CD4-positive, alpha-beta T cell (primary cell): ENCODE measurements at regions of chr1 and their contacts with region 1.

Region 1: DNA sequence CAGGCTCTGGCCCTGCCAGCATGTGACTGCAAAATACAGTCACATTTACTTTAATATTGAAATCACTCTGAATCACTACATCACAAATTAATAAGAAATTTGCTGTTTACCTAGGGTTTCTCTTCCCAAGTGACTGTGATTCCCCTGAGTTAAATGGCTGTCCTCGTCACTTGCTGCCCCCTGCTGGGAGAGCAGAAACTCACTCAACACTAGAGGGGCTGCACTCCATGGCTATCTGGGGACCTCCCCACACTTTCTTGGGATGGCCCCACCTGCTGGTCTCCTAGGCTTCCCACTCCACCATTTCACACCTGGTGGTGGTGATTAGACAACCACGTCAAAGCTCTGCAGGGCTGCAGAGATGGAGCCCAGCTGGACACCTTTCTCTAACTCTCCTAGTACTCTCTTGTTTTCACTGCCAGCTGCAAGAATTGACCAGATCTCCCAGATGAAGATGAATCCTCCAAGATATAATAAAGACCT is 63.4 kb downstream of the CD2 start:
- DNase-seq: peak; percentile 50 to 89 (median 70)
- ATAC-seq: peak; percentile 63
- H3K4me3 ChIP-seq: no peak overlapping the region
- H3K4me3 Mint-ChIP-seq: peak overlapping the region; percentile 68
- H3K27ac ChIP-seq: no peak overlapping the region
- H3K27ac Mint-ChIP-seq: peak overlapping the region; percentile 95
- H3K4me1 ChIP-seq: peaks cover 23% of the 10 kb centered on the region
- H3K4me1 Mint-ChIP-seq: peaks cover 38% of the 10 kb centered on the region
- H3K27me3 ChIP-seq: no peaks in the 10 kb centered on the region
- H3K27me3 Mint-ChIP-seq: no peaks in the 10 kb centered on the region
- CTCF ChIP-seq: peak; percentile 94

Region 2: GRCh38 chr1:116411784-116412479 is 405.7 kb before region 1 on chr1:
- CTCF ChIA-PET with region 1: no interaction called
- POLR2A ChIA-PET with region 1: no interaction called
- intact Hi-C with region 1: no loop called
- DNase-seq: no peak
- ATAC-seq: no peak
- H3K4me3 ChIP-seq: no peak overlapping the region
- H3K4me3 Mint-ChIP-seq: no peak overlapping the region
- H3K27ac ChIP-seq: no peak overlapping the region
- H3K27ac Mint-ChIP-seq: no peak overlapping the region
- H3K4me1 ChIP-seq: no peaks in the 10 kb centered on the region
- H3K4me1 Mint-ChIP-seq: peaks cover 27% of the 10 kb centered on the region
- H3K27me3 ChIP-seq: no peaks in the 10 kb centered on the region
- H3K27me3 Mint-ChIP-seq: no peaks in the 10 kb centered on the region
- CTCF ChIP-seq: no peak

Region 3: DNA sequence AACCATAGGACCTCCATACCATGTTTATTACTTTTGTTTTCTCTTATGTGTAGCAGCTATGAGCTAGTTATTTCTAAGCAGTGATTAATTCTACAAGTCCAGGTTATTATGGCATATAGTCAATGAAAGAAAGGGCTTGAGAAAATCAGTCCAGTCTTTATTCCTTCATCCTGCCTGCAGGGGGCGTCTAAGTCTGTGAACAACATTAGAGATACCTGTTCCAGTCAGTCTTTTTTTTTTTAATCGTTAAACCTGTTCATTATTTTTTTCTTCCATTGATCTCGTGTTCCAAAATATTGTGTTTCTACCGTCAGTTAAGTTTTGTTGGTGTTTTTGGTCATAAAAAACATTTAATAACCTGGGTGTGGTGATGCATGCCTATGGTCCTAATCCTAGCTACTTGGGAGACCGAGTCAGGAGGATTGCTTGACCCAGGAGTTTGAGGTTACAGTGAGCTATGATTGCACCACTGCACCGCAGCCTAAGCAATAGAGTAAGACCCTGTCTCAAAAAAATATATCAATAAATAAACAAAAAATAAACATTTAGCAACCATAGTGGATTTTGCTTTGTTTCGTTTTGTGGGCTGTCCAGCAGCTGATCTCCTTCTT is 92.8 kb before region 1 on chr1:
- CTCF ChIA-PET with region 1: interaction called, 15 read pairs
- POLR2A ChIA-PET with region 1: no interaction called
- intact Hi-C with region 1: loop called in 1 of 2 experiments (anchors 1 kb)
- DNase-seq: peak; percentile 56 to 90 (median 72)
- ATAC-seq: no peak
- H3K4me3 ChIP-seq: no peak overlapping the region
- H3K4me3 Mint-ChIP-seq: no peak overlapping the region
- H3K27ac ChIP-seq: no peak overlapping the region
- H3K27ac Mint-ChIP-seq: no peak overlapping the region
- H3K4me1 ChIP-seq: peaks cover 3% of the 10 kb centered on the region
- H3K4me1 Mint-ChIP-seq: peaks cover 22% of the 10 kb centered on the region
- H3K27me3 ChIP-seq: no peaks in the 10 kb centered on the region
- H3K27me3 Mint-ChIP-seq: no peaks in the 10 kb centered on the region
- CTCF ChIP-seq: peak; percentile 97

Region 4: GRCh38 chr1:116754198-116754977 is 63.2 kb before region 1 on chr1 and contains the start of gene CD2:
- CTCF ChIA-PET with region 1: interaction called, 5 read pairs
- POLR2A ChIA-PET with region 1: interaction called, 18 read pairs
- intact Hi-C with region 1: loop called in 1 of 2 experiments (anchors 5 kb)
- DNase-seq: peak in 11 of 14 experiments; percentile 47 to 82 (median 60)
- ATAC-seq: peak; percentile 86
- H3K4me3 ChIP-seq: peak within 1 kb of the TSS; percentile 78
- H3K4me3 Mint-ChIP-seq: peak within 1 kb of the TSS; percentile 97
- H3K27ac ChIP-seq: peak within 1 kb of the TSS; percentile 81 to 82
- H3K27ac Mint-ChIP-seq: peak within 1 kb of the TSS; percentile 99
- H3K4me1 ChIP-seq: peaks cover 19% of the 10 kb centered on the region
- H3K4me1 Mint-ChIP-seq: peaks cover 59% of the 10 kb centered on the region
- H3K27me3 ChIP-seq: no peaks in the 10 kb centered on the region
- H3K27me3 Mint-ChIP-seq: no peaks in the 10 kb centered on the region
- CTCF ChIP-seq: peak; percentile 13
- total RNA-seq, gene CD2: 150 to 151 TPM

Region 5: GRCh38 chr1:116769561-116769977 is 48.1 kb before region 1 on chr1:
- CTCF ChIA-PET with region 1: interaction called, 31 read pairs
- POLR2A ChIA-PET with region 1: interaction called, 103 read pairs
- intact Hi-C with region 1: loop called (anchors 1 to 2 kb)
- DNase-seq: peak in 13 of 14 experiments; percentile 60 to 94 (median 68)
- ATAC-seq: peak; percentile 79
- H3K4me3 ChIP-seq: no peak overlapping the region
- H3K4me3 Mint-ChIP-seq: peak overlapping the region; percentile 66
- H3K27ac ChIP-seq: peak overlapping the region; percentile 88 to 89
- H3K27ac Mint-ChIP-seq: peak overlapping the region; percentile 99
- H3K4me1 ChIP-seq: peaks cover 74% of the 10 kb centered on the region
- H3K4me1 Mint-ChIP-seq: peaks cover 97% of the 10 kb centered on the region
- H3K27me3 ChIP-seq: no peaks in the 10 kb centered on the region
- H3K27me3 Mint-ChIP-seq: no peaks in the 10 kb centered on the region
- CTCF ChIP-seq: no peak

Region 6: DNA sequence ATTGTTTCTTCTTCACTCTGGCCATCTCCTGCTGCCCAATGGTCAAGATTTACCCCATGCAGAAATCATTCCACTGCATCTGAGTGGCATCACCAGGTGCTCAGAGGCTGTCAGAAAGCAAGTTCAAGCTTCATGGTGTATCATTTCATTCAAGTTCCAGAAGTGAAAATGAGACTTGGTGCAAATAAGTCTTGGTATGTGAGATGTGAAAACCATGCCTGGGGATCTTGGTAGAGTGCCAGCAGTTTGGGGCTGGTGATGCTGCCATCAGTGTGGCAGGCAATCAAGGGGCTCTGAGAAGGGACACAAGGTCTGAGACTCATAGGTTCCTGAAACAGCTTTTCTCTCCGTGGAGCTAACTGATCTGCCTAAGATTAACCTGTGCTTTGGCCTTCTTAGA is 11.4 kb before region 1 on chr1:
- CTCF ChIA-PET with region 1: no interaction called
- POLR2A ChIA-PET with region 1: interaction called, 15 read pairs
- intact Hi-C with region 1: loop called in 1 of 2 experiments (anchors 2 kb)
- DNase-seq: peak in 11 of 14 experiments; percentile 29 to 79 (median 48)
- ATAC-seq: peak; percentile 27
- H3K4me3 ChIP-seq: peak overlapping the region; percentile 9
- H3K4me3 Mint-ChIP-seq: peak overlapping the region; percentile 64
- H3K27ac ChIP-seq: peak overlapping the region; percentile 11 to 80
- H3K27ac Mint-ChIP-seq: peak overlapping the region; percentile 93
- H3K4me1 ChIP-seq: peaks cover 78% of the 10 kb centered on the region
- H3K4me1 Mint-ChIP-seq: peaks cover 90% of the 10 kb centered on the region
- H3K27me3 ChIP-seq: no peaks in the 10 kb centered on the region
- H3K27me3 Mint-ChIP-seq: no peaks in the 10 kb centered on the region
- CTCF ChIP-seq: no peak

Region 7: GRCh38 chr1:116934586-116935207 is 117.1 kb after region 1 on chr1:
- CTCF ChIA-PET with region 1: no interaction called
- POLR2A ChIA-PET with region 1: no interaction called
- intact Hi-C with region 1: loop called in 1 of 2 experiments (anchors 2 kb)
- DNase-seq: peak in 3 of 14 experiments; percentile 51 to 59 (median 58)
- ATAC-seq: no peak
- H3K4me3 ChIP-seq: no peak overlapping the region
- H3K4me3 Mint-ChIP-seq: no peak overlapping the region
- H3K27ac ChIP-seq: no peak overlapping the region
- H3K27ac Mint-ChIP-seq: peak overlapping the region; percentile 76
- H3K4me1 ChIP-seq: peaks cover 7% of the 10 kb centered on the region
- H3K4me1 Mint-ChIP-seq: peaks cover 25% of the 10 kb centered on the region
- H3K27me3 ChIP-seq: no peaks in the 10 kb centered on the region
- H3K27me3 Mint-ChIP-seq: no peaks in the 10 kb centered on the region
- CTCF ChIP-seq: peak; percentile 33